ENCODE measurements at regions of chr19 and their contacts with region 1.

Region 1: DNA sequence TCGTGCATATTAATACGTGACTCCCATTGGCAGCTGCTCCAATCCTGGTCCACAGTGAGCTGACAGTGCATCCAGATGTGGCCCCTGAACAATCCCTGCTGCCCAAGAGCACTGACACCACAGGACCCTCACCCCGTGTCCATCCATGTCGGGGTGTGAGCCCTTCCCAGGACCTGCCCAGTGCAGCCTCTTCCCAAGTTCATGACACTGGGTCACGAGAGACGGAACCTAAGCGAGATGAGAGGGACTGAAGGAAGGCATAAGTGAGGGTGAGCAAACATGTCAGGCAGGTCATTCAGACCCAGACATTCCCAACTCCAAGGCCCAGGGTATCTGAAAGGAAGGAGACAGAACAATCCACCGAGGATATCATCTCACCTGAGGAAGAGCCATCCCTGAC is 3.5 kb downstream of the ZNF468 start:
- DNase-seq: no peak
- ATAC-seq: no peak
- H3K4me3 ChIP-seq: no peak overlapping the region
- H3K27ac ChIP-seq: no peak overlapping the region
- H3K4me1 ChIP-seq: peaks cover 0 to 10% (median 0%) of the 10 kb centered on the region in 12 donors
- H3K27me3 ChIP-seq: no peaks in the 10 kb centered on the region
- CTCF ChIP-seq: no peak
- POLR2A ChIP-seq: no peak

Region 2: DNA sequence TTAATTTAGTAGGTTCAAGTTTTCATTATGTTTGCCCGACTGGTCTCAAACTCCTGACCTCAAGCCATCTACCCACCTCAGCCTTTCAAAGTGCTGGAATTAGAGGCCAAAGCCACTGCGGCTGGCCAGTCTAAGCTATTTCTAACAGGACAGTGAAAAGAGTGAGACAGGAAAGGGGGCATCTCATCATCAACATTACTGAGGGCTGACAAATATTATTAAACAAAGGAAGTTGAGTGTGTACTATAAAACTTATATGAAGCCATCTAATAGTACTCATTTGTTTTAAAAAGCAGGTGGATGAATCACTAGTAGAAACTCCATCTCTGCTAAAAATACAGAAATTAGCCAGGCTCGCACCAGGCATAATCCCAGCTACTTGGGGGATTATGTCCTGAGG is 143.3 kb before region 1 on chr19:
- intact Hi-C with region 1: no loop called
- DNase-seq: no peak
- ATAC-seq: no peak
- H3K4me3 ChIP-seq: no peak overlapping the region
- H3K27ac ChIP-seq: no peak overlapping the region
- H3K4me1 ChIP-seq: peaks cover 0 to 3% (median 0%) of the 10 kb centered on the region in 12 donors
- H3K27me3 ChIP-seq: no peaks in the 10 kb centered on the region
- CTCF ChIP-seq: no peak
- POLR2A ChIP-seq: no peak

Region 3: GRCh38 chr19:52823676-52824075 is 30.2 kb before region 1 on chr19:
- intact Hi-C with region 1: loop called in 4 of 10 experiments (anchors 2 to 5 kb)
- DNase-seq: no peak
- ATAC-seq: no peak
- H3K4me3 ChIP-seq: no peak overlapping the region
- H3K27ac ChIP-seq: no peak overlapping the region
- H3K4me1 ChIP-seq: peaks cover 0 to 10% (median 0%) of the 10 kb centered on the region in 12 donors
- H3K27me3 ChIP-seq: no peaks in the 10 kb centered on the region
- CTCF ChIP-seq: no peak
- POLR2A ChIP-seq: no peak

Region 4: DNA sequence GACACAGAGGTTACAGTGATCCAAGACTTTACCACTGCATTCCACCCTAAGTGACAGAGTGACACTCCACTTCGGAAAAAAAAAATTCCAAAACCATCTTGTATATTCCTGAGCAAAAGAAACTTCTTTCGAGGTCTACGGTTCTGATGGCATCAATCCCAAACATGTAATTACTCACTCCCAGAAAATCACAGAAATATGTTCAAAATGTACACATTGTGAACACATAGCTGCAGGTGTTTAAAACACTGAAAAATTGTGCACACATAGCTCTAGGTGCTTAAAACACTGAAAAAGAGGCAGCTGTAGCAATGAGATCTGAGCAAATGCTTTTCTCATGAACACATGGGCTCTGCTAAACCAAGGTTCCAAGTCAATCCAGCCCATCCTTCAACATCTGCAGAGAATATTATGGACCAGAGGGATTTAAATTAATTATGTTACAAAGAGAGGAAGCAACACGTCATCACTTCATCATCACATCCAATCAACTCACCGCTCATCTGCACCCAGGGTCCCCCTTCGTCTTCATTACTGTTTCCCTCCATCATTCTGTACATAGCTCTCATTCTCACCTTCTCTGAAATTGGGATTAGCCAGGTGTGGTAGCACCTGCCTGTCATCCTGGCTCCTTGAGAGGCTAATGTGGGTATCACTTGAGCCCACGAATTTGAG is 17.7 kb after region 1 on chr19:
- intact Hi-C with region 1: no loop called
- DNase-seq: no peak
- ATAC-seq: no peak
- H3K4me3 ChIP-seq: no peak overlapping the region
- H3K27ac ChIP-seq: no peak overlapping the region
- H3K4me1 ChIP-seq: no peaks in the 10 kb centered on the region
- H3K27me3 ChIP-seq: no peaks in the 10 kb centered on the region
- CTCF ChIP-seq: no peak
- POLR2A ChIP-seq: no peak

Region 5: DNA sequence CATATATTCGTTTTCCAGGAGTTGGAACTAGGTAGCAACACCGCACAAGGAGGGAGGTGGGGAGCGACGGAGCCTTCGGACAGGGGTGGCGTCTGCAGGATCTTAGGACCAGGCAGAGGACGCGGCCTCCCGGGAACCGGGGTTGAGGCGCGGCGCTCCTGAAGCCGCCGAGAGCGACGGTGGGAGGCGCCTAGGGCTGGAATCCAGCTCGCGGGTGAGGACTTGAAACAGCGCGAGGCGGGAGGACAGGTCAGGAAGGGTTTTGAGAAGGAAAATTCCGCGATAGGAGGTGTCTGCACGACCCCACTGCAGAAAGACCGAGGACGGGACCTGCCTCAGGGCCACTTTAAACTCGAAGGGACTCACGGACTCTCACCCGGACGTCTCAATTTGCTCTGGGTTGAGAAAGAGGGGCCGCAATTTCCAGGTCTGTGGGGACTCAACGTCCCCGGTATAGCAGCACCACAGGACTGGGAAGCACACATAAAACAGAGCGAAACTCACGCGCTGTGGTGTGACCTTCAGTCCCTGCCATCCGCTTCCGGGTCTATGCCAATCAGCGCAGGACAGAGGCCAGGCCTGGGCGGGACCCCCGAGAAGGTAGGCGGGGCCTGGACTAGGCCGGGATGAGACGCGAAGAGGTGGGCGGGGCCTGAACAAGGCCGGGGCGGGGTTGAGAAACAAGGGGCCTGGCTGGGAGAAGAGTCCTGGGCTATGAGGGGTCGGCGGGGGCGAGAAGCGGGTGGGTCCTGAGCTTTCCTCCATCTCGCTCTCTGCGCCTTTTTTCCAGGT is 43.5 kb after region 1 on chr19 and contains the start of gene ZNF320:
- intact Hi-C with region 1: loop called in 2 of 10 experiments (anchors 5 kb)
- DNase-seq: peak; percentile 97 to 98 (median 98)
- ATAC-seq: peak; percentile 100
- H3K4me3 ChIP-seq: peak within 1 kb of the TSS; percentile 66 to 96 (median 86)
- H3K27ac ChIP-seq: peak within 1 kb of the TSS; percentile 80 to 98 (median 93)
- H3K4me1 ChIP-seq: peaks cover 0 to 20% (median 11%) of the 10 kb centered on the region in 12 donors
- H3K27me3 ChIP-seq: no peaks in the 10 kb centered on the region
- CTCF ChIP-seq: no peak
- POLR2A ChIP-seq: peak in 1 of 2 donors; percentile 81
- total RNA-seq, gene ZNF320: 7.6 to 13.5 (median 9.6) TPM